WTC11 (cell line): ENCODE measurements at regions of chr15 and their contacts with region 1.

Region 1: GRCh38 chr15:29090617-29091466 is 178.8 kb downstream of the NSMCE3 start:
- DNase-seq: peak; percentile 77
- ATAC-seq: peak; percentile 82
- H3K4me3 Mint-ChIP-seq: no peak overlapping the region
- H3K27ac Mint-ChIP-seq: no peak overlapping the region
- H3K4me1 Mint-ChIP-seq: peaks cover 7% of the 10 kb centered on the region
- H3K27me3 Mint-ChIP-seq: no peaks in the 10 kb centered on the region
- CTCF ChIP-seq: peak; percentile 99

Region 2: DNA sequence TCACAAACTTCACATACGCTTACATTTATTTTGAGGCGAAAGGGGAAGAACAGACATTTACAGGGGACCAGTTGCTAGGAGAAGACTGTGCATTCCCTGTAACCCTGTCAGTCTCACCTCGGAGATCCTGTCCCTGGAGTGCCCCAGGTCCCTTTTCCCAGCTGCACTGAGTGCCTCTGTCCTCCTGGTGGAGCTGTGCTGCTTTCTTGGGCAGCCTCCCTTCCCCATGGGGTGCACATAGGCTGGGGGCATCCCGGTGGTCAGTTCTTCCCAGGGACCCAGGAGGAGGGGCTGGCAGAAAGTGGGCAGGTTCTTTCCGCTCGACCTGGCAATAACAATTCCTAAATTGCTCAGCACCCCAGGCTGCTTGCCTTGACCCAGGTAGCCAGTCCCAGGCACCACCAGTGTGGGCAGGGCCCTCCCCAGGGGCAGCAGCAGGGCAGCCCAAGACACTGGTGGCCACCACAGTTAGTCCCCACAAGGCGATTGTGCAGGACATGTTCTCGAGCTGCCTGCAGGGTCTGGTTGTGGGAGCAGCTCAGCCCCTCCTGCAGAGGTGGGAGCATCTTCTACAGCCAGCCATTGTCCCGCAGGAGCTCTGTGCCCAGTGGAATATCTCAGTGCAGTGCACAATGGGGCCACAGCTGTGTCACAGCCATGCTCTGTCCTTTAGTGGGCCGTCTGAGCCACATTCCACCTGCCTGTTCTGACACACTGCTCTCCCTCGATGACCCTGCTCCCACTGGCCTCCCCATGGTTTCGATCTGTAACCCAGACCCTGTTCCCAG is 168.7 kb before region 1 on chr15:
- CTCF ChIA-PET with region 1: interaction called, 14 read pairs
- POLR2A ChIA-PET with region 1: no interaction called
- DNase-seq: peak; percentile 71
- ATAC-seq: peak; percentile 65
- H3K4me3 Mint-ChIP-seq: no peak overlapping the region
- H3K27ac Mint-ChIP-seq: no peak overlapping the region; the same call in 1 of the 2 replicates
- H3K4me1 Mint-ChIP-seq: peaks cover 12% of the 10 kb centered on the region
- H3K27me3 Mint-ChIP-seq: no peaks in the 10 kb centered on the region
- CTCF ChIP-seq: peak; percentile 20; the same call in 1 of the 2 replicates

Region 3: DNA sequence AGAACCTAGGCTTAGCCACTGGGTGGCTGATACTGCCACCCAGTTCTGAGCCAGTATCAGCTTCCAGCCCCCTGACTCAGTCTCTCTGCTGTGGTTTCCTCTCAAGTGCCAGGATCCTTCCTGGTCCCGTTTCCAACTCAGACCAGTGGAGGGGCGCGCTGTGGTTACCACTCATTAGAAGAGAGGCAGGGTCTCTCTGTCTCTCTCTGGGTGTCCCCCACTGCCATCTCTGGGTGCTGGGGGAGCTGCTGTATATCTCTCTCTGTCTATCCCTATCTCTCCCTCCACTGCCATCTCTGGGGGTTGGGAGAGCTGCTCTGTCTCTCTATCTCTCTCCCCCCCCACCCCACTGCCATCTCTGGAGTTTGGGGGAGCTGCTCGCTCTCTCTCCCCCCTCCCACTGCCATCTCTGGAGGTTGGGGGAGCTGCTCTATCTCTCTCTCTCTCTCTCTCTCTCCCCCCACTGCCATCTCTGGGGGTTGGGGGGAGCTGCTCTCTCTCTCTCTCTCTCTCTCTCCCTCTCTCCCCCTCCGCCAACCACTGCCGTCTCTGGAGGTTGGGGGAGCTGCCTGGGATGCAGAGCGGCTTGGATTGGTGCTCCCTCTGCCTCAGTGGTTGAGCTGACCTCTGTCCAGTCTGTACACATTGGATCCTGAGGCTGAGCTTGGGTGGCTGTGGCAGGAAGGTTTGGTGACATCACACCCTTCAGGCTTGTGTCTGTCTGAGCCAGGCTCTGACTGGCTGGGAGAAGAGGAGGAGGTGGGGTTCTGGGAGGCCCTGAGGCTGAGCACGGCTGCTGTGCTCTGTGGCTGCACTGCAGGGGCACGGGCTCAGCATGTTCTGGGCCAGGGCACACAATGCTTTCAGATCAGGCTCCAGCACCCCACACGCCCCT is 106.2 kb before region 1 on chr15:
- CTCF ChIA-PET with region 1: interaction called, 52 read pairs
- POLR2A ChIA-PET with region 1: no interaction called
- DNase-seq: no peak
- ATAC-seq: peak; percentile 64
- H3K4me3 Mint-ChIP-seq: no peak overlapping the region
- H3K27ac Mint-ChIP-seq: no peak overlapping the region
- H3K4me1 Mint-ChIP-seq: peaks cover 10% of the 10 kb centered on the region
- H3K27me3 Mint-ChIP-seq: no peaks in the 10 kb centered on the region
- CTCF ChIP-seq: no peak

Region 4: GRCh38 chr15:29018120-29018805 is 72.6 kb before region 1 on chr15:
- CTCF ChIA-PET with region 1: interaction called, 22 read pairs
- POLR2A ChIA-PET with region 1: no interaction called
- DNase-seq: peak; percentile 68
- ATAC-seq: peak; percentile 99
- H3K4me3 Mint-ChIP-seq: no peak overlapping the region
- H3K27ac Mint-ChIP-seq: peak overlapping the region; percentile 12; the same call in 1 of the 2 replicates
- H3K4me1 Mint-ChIP-seq: peaks cover 22% of the 10 kb centered on the region
- H3K27me3 Mint-ChIP-seq: no peaks in the 10 kb centered on the region
- CTCF ChIP-seq: no peak

Region 5: DNA sequence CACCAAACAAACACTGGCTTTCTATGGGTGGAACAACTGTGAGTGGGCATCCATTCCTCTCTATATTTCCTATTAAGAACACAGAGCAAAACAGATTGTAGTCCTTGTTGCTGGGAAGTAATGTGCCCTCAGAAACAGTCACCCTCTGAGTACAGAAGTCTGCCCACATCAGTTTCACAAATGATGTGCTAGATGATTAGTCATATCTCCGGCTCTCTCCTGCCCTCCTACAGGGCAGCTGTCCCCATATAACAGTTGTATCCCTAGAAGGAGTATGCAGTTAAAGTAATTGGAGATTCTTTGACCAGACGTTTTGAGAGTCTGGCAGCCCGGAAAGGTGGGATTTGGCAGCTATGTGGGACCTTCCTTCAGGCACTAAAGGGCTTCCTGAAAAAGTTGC is 45.1 kb before region 1 on chr15:
- CTCF ChIA-PET with region 1: interaction called, 13 read pairs
- POLR2A ChIA-PET with region 1: no interaction called
- DNase-seq: no peak
- ATAC-seq: no peak
- H3K4me3 Mint-ChIP-seq: no peak overlapping the region
- H3K27ac Mint-ChIP-seq: no peak overlapping the region
- H3K4me1 Mint-ChIP-seq: peaks cover 8% of the 10 kb centered on the region
- H3K27me3 Mint-ChIP-seq: no peaks in the 10 kb centered on the region
- CTCF ChIP-seq: no peak

Region 6: DNA sequence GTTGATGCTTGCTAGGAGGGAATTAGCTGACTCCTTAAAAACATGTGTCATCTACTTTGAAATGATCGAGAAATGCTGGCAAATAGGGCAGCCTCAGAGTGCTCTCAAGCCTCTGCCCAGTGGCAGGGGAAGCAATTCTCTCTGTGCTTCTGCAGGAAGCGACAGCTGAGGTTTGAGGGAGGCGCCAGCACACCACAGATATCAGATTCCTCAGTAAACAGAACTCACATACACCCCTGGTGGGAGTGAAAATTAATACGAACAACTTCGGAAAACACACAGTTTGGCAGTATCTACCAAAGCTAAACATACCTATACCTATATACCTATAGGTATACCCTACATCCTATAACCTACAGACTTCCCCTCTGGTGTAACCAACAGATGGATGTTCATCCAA is 117.5 kb after region 1 on chr15:
- CTCF ChIA-PET with region 1: no interaction called
- POLR2A ChIA-PET with region 1: no interaction called
- DNase-seq: no peak
- ATAC-seq: peak; percentile 60
- H3K4me3 Mint-ChIP-seq: no peak overlapping the region
- H3K27ac Mint-ChIP-seq: no peak overlapping the region; the same call in 1 of the 2 replicates
- H3K4me1 Mint-ChIP-seq: peaks cover 4% of the 10 kb centered on the region
- H3K27me3 Mint-ChIP-seq: no peaks in the 10 kb centered on the region; the same call in 1 of the 2 replicates
- CTCF ChIP-seq: no peak